ENCODE measurements at regions of chr12 and their contacts with region 1.

Region 1: DNA sequence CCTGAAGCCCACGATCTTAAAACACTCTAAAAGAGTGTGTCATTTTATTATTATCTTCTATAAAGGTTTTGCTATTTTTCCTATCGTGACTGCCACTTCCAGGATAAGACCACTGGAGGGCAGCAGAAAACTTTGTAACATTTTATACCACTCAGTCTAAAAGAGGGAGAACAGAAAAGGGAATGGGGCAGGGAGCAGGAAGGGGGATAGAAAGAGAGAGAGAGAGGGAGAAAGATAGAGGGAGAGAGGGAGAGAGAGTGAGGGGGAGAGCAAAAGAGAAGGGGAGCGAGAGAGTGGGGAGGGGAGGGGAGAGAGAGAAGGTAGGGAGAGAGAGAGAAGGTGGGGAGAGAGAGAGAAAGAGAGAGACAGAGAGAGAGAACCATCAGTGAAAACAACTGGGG is 2.0 kb upstream of the ART4 start:
- DNase-seq: no peak

Region 2: DNA sequence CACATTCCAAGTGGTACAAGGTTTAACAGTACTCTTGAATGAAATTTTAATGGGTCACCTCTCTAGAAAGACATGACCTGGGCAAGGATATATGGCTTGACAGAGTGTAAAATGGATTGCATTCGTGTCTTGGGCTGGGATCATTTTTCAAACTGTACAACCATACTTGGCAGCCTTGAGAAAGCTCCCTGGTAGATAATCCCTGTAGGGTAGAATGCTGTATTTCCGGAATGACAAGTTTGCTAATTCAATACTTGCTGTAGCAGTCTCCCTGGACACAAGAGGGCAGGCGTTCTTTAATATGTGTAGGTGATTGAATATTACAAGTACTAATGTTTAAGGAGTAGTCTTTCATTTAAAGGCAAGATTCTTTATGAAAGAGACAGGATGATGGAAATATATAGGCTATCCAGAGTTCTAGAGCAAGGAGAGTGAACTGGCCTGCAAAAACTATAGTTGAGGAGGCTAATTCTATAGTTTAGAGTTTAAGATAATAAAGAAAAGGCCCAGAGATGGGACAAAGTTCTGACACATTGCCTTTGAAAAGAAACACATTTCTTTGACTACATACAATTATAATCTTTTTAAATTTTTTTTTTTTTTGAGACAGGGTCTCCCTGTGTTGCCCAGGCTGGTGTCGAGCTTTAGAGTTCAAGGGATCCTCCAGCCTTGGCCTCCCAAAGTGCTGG is 331.1 kb before region 1 on chr12:
- intact Hi-C with region 1: no loop called
- DNase-seq: no peak

Region 3: DNA sequence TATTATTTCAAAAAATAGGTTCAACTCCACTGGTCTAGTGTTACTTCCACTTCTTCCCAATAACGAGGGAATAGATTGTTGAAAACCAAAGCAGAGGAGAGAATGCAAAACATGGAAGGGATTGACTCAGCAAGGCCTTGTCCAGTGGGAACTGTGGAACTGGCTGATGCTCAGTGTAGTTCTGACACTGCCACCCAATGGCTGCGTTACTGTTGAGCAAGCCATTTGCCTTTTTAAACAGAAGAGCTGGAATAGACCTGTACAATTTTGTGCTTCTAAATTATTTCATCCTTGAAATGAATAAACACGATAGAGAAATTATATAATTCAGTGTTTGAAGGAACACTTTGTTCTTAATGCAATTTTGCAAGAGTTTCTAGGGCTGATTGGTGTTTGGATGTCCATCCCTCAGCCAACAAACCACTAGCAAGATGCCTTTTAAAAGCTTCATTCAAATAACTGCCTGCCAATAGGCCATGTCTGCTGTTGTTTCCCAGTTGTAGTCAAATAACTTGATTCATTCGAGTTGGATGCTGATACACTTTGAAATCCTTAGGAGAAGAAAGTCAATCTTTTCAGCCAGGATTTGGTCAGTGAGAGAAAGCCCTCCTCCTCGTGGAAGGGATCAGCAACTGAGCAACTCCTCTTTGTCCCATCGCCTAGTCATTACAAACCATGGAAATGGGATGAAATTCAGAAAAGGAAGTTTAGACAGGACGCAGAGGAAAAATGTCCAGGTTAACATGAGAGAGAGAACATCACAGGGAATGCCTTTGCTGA is 47.6 kb after region 1 on chr12:
- intact Hi-C with region 1: loop called (anchors 2 to 5 kb)
- DNase-seq: peak; percentile 84

Region 4: GRCh38 chr12:14995583-14996425 is 150.5 kb after region 1 on chr12:
- intact Hi-C with region 1: loop called (anchors 5 kb)
- DNase-seq: no peak

Region 5: DNA sequence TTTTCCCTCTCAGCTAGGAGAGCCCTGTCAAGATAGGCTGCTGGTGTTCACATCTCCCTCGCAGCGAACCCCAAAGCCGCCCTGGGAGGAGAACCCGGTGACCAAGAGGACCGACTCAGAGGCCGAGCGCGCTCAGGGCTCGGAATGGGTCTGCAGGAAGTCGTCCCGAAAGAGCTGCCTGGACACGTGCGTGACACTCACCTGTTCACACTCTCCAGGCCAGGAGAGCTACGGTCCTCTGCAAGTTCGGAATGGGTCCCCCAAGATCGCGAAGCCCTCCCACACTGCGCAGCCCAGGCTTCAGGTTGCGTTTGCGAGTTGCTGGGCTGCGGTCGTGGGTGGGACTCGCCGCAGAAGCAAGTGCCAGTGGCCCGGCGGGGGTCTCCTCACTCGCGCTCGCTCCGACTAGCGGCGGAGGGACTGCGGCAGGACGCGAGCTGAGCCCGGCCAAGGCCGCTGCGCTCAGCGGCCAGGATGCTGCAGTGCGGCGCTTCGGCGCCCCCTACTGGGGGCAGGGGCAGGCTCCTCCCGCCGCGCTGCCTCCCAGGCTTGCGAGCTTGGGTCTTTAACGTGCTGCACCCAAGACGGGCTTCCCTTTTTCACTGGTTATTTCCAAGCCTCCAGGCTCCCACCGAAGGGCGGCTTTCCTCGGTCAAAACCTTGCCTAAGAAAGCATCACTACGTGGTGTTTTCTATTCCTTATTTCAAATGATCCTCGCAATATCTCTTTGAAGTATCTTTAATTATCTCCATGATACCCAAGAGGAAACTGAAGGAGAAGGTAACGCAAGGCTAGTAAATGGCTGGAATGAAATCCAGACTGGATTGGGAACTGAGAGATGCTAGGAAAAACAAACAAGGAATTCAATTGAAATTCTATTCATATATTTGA is 375.9 kb after region 1 on chr12 and contains the start of gene RERG:
- intact Hi-C with region 1: loop called in 1 of 2 experiments (anchors 5 kb)
- DNase-seq: peak; percentile 94
- total RNA-seq, gene RERG: 98.8 to 107 TPM

Region 6: GRCh38 chr12:15268927-15269552 is 423.7 kb after region 1 on chr12:
- intact Hi-C with region 1: loop called in 1 of 2 experiments (anchors 10 kb)
- DNase-seq: no peak

Measured in posterior vena cava (tissue), 2 donors.